ENCODE measurements at regions of chr6 and their contacts with region 1.

Region 1: GRCh38 chr6:30742316-30743098 is at the start of gene FLOT1:
- DNase-seq: peak; percentile 93 to 98
- ATAC-seq: peak; percentile 79 to 84
- H3K4me3 ChIP-seq: peak within 1 kb of the TSS; percentile 63 to 83 (median 74)
- H3K27ac ChIP-seq: peak within 1 kb of the TSS; percentile 86 to 94 (median 86)
- H3K4me1 ChIP-seq: peaks cover 22 to 24% of the 10 kb centered on the region in 2 donors
- H3K27me3 ChIP-seq: no peaks in the 10 kb centered on the region
- CTCF ChIP-seq: peak in 1 of 5 experiments; percentile 8
- POLR2A ChIP-seq: peak; percentile 70 to 71
- total RNA-seq, gene FLOT1: 96.9 to 127 (median 117) TPM

Region 2: DNA sequence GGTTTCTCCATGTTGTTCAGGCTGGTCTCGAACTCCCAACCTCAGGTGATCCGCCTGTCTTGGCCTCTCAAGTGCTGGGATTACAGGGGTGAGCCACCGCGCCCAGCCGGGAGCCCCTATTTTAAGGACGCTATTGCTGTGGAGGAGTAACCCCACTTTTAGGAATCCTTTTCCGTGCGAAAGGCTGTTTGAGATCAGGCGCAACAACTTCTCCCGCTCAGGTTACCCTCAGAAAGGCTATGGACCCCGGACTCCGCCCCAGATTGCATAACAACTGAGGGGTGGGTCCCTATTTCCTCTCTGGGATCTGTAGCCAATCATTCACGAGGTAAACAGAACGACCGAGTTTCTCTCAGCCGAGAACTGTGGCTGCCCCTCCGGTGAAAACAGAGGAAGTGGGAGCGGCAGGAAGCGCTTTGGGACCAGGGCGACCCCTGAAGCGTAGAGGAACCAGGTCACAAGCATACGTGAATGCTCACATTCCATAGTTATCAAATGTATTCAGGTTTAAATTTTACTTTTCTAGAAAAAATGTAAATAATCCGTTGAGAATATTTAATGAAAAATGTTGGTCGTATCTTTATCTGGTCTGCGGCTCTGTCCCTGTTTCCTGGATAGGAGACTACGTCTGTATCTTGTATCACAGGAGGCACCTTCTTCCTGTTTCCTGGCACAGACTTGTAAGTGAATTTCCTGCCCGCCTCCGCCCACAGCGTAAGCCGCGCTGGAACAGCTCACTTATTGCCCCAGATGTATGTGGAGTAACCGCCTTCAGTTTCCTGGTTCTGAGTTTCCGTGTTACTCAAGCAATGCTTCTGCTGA is 226.4 kb before region 1 on chr6:
- in situ Hi-C with region 1: no loop called
- intact Hi-C with region 1: no loop called
- DNase-seq: peak; percentile 79 to 85
- ATAC-seq: peak; percentile 94 to 95
- H3K4me3 ChIP-seq: peak overlapping the region; percentile 45 to 56 (median 51)
- H3K27ac ChIP-seq: peak overlapping the region; percentile 81 to 87 (median 83)
- H3K4me1 ChIP-seq: peaks cover 0 to 4% of the 10 kb centered on the region in 2 donors
- H3K27me3 ChIP-seq: no peaks in the 10 kb centered on the region
- CTCF ChIP-seq: no peak
- POLR2A ChIP-seq: peak; percentile 51 to 72

Region 3: DNA sequence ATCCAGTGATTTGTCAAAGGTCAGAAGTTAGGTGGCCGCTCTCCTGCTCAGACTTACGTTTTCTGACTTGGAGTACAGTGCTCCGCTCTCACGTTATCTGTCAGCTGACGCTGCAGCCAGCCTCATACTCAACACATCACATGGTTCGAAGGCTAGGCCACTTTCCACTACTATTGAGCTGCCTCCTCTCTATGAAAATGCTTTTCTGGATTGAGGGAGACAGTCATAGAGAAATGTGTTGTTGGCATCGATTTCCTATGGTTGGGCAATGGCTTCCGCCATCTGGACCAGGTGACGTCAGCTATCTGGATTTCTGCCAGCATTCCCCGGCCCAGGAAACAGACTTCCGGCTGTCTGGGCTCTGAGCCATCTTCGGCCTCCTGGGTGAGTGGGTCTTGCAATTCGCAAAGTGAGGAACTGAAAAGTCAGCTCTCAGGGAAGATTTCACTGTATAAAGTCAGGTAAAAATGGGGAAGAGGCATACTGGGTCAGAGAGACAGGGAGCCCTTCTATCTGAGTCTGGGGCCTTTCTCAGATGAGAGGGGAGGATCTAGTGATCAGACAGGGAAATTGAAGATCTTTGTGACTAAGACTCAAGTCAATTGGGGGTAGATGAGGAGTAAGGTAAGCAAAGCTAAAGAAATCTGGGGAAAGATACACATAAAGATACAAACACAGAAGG is 39.4 kb after region 1 on chr6:
- in situ Hi-C with region 1: no loop called
- intact Hi-C with region 1: loop called (anchors 2 kb)
- DNase-seq: peak; percentile 81 to 89
- ATAC-seq: peak; percentile 86 to 87
- H3K4me3 ChIP-seq: peak overlapping the region in 1 of 4 donors; percentile 23
- H3K27ac ChIP-seq: peak overlapping the region; percentile 73 to 83 (median 74)
- H3K4me1 ChIP-seq: peaks cover 26 to 34% of the 10 kb centered on the region in 2 donors
- H3K27me3 ChIP-seq: no peaks in the 10 kb centered on the region
- CTCF ChIP-seq: no peak
- POLR2A ChIP-seq: peak in 1 of 2 donors; percentile 22

Region 4: DNA sequence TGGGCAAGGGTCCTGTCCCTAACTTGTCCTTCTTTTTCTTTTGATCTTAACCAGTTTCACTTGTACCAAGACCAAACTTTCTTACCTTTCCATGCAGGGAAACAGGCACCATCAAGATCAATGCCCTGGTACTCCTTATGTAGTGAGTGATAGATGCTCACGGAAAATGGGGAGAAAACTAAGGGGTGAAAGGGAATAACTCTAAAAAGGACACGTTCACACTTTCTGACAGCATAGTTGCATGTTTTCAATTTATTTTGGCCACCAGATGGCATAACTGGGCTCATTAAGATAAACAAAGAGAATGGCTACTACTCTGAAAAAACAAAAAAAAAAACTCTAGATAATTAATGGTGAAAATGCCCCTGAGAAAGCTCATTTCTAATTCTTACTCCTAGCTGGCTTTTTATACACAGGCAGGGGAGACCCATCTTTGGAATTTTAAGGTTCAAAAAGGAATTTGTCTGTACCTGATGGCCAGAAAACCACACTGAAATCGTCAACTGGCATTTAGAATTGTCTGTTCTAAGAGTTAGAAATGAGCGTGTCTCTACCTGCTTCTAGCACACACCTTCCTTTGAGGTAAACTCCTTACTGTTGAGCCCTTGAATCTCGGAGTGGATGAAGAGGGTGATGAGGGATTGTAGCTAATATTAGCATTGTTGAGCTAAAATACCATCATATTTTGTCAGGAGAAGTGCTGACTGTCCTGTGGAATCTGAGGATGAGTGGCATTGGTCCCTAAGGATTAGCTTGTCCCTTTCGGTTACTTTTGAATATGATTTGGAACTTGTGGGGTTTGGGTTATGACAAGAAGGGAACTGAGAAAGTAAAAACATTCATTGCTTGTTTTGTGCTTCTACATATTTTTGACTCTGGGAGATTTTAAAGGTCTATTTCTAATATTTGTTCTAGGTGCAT is 79.6 kb after region 1 on chr6:
- in situ Hi-C with region 1: loop called in 2 of 4 experiments (anchors 5 to 10 kb)
- intact Hi-C with region 1: loop called (anchors 1 kb)
- DNase-seq: no peak
- ATAC-seq: no peak
- H3K4me3 ChIP-seq: no peak overlapping the region
- H3K27ac ChIP-seq: peak overlapping the region in 2 of 4 donors; percentile 6 to 10
- H3K4me1 ChIP-seq: peaks cover 16 to 23% of the 10 kb centered on the region in 2 donors
- H3K27me3 ChIP-seq: no peaks in the 10 kb centered on the region
- CTCF ChIP-seq: peak; percentile 34 to 54 (median 50)
- POLR2A ChIP-seq: no peak

Region 5: GRCh38 chr6:30877419-30878371 is 135.2 kb after region 1 on chr6:
- in situ Hi-C with region 1: loop called in 3 of 4 experiments (anchors 10 to 25 kb)
- intact Hi-C with region 1: loop called (anchors 1 kb)
- DNase-seq: peak; percentile 74 to 89
- ATAC-seq: peak; percentile 86 to 88
- H3K4me3 ChIP-seq: peak overlapping the region; percentile 40 to 54 (median 41)
- H3K27ac ChIP-seq: peak overlapping the region; percentile 76 to 80 (median 79)
- H3K4me1 ChIP-seq: peaks cover 20 to 33% of the 10 kb centered on the region in 2 donors
- H3K27me3 ChIP-seq: no peaks in the 10 kb centered on the region
- CTCF ChIP-seq: peak; percentile 89 to 92 (median 91)
- POLR2A ChIP-seq: peak in 1 of 2 donors; percentile 11

Region 6: GRCh38 chr6:31058128-31058894 is 315.8 kb after region 1 on chr6:
- in situ Hi-C with region 1: no loop called
- intact Hi-C with region 1: no loop called
- DNase-seq: no peak
- ATAC-seq: no peak
- H3K4me3 ChIP-seq: no peak overlapping the region
- H3K27ac ChIP-seq: no peak overlapping the region
- H3K4me1 ChIP-seq: no peaks in the 10 kb centered on the region
- H3K27me3 ChIP-seq: no peaks in the 10 kb centered on the region
- CTCF ChIP-seq: peak in 3 of 5 experiments; percentile 21 to 35 (median 26)
- POLR2A ChIP-seq: no peak

Region 7: GRCh38 chr6:31087494-31088089 is 345.1 kb after region 1 on chr6:
- in situ Hi-C with region 1: no loop called
- intact Hi-C with region 1: loop called (anchors 5 kb)
- DNase-seq: peak; percentile 59 to 73
- ATAC-seq: peak; percentile 93 to 99
- H3K4me3 ChIP-seq: peak overlapping the region in 3 of 4 donors; percentile 11 to 36 (median 13)
- H3K27ac ChIP-seq: peak overlapping the region in 3 of 4 donors; percentile 1 to 36 (median 25)
- H3K4me1 ChIP-seq: peaks cover 8 to 9% of the 10 kb centered on the region in 2 donors
- H3K27me3 ChIP-seq: no peaks in the 10 kb centered on the region
- CTCF ChIP-seq: peak; percentile 74 to 82 (median 81)
- POLR2A ChIP-seq: no peak

Measured in gastrocnemius medialis (tissue), 4 donors.